CD8-positive, alpha-beta memory T cell (primary cell): ENCODE measurements at regions of chr19 and their contacts with region 1.

Region 1: DNA sequence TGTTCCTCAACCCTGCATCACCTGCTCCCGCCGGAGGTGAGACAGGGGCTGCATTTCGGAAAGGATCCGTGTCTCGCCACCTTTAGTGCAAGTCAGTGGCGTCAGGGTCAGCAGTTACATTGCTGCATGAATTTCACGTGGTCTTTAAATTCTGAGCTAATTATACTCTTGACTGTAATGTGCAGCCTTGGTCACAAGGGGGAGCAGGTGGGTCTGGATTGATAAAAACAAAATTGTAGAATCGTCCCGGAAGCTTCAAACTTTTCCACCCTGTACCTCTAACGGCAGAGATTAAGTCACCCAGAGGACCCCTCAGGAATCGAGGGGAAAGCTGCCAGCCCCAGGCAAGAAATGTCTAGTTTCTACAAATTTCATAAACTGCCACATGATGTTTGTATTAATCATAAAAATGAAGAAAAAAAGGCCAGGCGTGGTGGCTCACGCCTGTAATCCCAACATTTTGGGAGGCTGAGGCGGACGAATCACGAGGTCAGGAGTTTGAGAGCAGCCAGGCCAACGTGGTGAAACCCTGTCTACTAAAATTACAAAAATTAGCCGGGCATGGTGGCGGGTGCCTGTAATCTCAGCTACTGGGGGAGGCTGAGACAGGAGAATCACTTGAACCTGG is 20.2 kb downstream of the BBC3 start:
- DNase-seq: peak; percentile 66 to 83 (median 73)
- H3K4me3 ChIP-seq: no peak overlapping the region
- H3K4me3 Mint-ChIP-seq: no peak overlapping the region
- H3K27ac ChIP-seq: peak overlapping the region; percentile 53
- H3K27ac Mint-ChIP-seq: peak overlapping the region in 7 of 8 donors; percentile 20 to 82 (median 55)
- H3K4me1 ChIP-seq: peaks cover 11% of the 10 kb centered on the region
- H3K4me1 Mint-ChIP-seq: peaks cover 6 to 9% (median 6%) of the 10 kb centered on the region in 3 donors
- H3K27me3 ChIP-seq: no peaks in the 10 kb centered on the region
- H3K27me3 Mint-ChIP-seq: no peaks in the 10 kb centered on the region

Region 2: DNA sequence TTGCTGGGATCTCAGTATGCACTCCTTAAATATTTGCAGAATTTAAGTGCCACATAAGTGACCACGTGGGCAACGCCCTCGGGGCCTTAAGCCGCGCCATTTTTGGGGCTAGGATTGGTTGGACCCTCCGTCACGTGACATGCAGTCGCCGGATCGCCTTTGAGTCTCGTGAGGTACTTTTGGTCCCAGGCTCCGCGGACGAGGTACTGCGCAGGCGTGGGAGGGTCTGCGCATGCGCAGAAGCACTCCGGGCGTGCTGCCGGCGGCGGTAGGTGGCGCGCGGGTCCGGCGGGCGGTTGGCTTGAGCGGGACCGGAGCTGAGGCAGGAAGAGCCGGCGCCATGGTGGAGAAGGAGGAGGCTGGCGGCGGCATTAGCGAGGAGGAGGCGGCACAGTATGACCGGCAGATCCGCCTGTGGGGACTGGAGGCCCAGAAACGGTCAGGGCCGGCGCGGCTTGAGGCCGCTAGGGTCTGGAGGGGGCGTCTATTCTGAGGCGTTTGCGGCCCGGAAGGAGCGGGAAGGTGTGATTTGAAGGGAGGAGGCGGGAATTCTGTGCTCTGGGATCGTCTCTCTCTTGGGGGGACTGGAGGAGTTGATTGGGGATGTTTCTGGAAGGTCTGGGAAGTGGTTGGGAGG is 80.1 kb before region 1 on chr19 and contains the start of gene SAE1:
- CTCF ChIA-PET with region 1: interaction called, 17 read pairs
- POLR2A ChIA-PET with region 1: interaction called, 6 read pairs
- DNase-seq: peak; percentile 85 to 94 (median 89)
- H3K4me3 ChIP-seq: peak within 1 kb of the TSS; percentile 97
- H3K4me3 Mint-ChIP-seq: peak within 1 kb of the TSS; percentile 96 to 100 (median 98)
- H3K27ac ChIP-seq: peak within 1 kb of the TSS; percentile 90
- H3K27ac Mint-ChIP-seq: peak within 1 kb of the TSS; percentile 74 to 99 (median 96)
- H3K4me1 ChIP-seq: peaks cover 33% of the 10 kb centered on the region
- H3K4me1 Mint-ChIP-seq: peaks cover 39 to 57% (median 52%) of the 10 kb centered on the region in 3 donors
- H3K27me3 ChIP-seq: no peaks in the 10 kb centered on the region
- H3K27me3 Mint-ChIP-seq: peaks cover 0 to 8% of the 10 kb centered on the region in 2 donors
- total RNA-seq, gene SAE1: 167 to 172 TPM

Region 3: DNA sequence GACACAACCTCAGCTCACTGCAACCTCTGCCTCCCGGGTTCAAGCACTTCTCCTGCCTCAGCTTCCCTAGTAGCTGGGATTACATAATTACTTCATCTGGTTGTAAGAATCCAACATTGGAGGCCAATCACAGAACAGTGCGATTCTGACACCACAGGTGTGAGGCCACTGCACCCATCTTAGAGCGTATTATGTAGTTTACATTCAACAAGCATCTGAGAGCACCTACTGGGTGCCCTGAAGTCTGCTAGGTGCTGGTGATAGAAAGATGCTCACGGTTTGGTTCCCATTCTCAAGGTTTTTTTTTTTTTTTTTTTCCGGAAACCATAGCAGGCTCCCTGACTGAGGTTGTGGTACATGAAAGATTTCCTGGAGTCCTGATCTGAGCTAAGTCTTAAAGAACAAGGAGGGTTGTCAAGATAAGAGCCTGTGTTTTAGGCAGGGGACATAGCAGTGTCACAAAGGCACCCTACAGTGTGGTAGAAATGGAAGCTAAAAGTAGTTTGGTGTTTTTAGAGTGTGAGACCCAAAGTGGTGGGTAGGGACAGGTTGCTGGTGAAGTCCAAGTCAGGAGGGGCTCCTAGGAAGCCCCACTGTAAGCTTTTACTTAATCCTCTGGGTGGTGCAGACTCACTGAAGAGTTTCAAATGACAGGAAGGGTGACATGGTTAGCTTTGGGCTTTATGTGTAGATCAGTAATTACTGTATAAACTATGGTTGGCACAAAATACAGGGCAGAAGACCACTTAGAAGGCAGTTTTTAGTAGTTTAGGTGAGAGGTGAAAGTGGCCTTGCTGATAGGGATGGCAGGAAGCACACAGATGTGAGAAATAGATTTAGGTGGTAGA is 64.9 kb before region 1 on chr19:
- CTCF ChIA-PET with region 1: interaction called, 59 read pairs
- POLR2A ChIA-PET with region 1: interaction called, 3 read pairs
- DNase-seq: peak in 2 of 5 donors; percentile 50 to 77
- H3K4me3 ChIP-seq: peak overlapping the region; percentile 22
- H3K4me3 Mint-ChIP-seq: peak overlapping the region; percentile 12 to 74 (median 48)
- H3K27ac ChIP-seq: no peak overlapping the region
- H3K27ac Mint-ChIP-seq: peak overlapping the region; percentile 49 to 94 (median 76)
- H3K4me1 ChIP-seq: peaks cover 45% of the 10 kb centered on the region
- H3K4me1 Mint-ChIP-seq: peaks cover 32 to 61% (median 56%) of the 10 kb centered on the region in 3 donors
- H3K27me3 ChIP-seq: no peaks in the 10 kb centered on the region
- H3K27me3 Mint-ChIP-seq: no peaks in the 10 kb centered on the region

Region 4: GRCh38 chr19:47152224-47153017 is 58.4 kb before region 1 on chr19:
- CTCF ChIA-PET with region 1: interaction called, 59 read pairs
- POLR2A ChIA-PET with region 1: interaction called, 3 read pairs
- DNase-seq: no peak
- H3K4me3 ChIP-seq: no peak overlapping the region
- H3K4me3 Mint-ChIP-seq: no peak overlapping the region
- H3K27ac ChIP-seq: no peak overlapping the region
- H3K27ac Mint-ChIP-seq: peak overlapping the region in 2 of 8 donors; percentile 58 to 69
- H3K4me1 ChIP-seq: peaks cover 39% of the 10 kb centered on the region
- H3K4me1 Mint-ChIP-seq: peaks cover 28 to 57% (median 51%) of the 10 kb centered on the region in 3 donors
- H3K27me3 ChIP-seq: no peaks in the 10 kb centered on the region
- H3K27me3 Mint-ChIP-seq: no peaks in the 10 kb centered on the region

Region 5: DNA sequence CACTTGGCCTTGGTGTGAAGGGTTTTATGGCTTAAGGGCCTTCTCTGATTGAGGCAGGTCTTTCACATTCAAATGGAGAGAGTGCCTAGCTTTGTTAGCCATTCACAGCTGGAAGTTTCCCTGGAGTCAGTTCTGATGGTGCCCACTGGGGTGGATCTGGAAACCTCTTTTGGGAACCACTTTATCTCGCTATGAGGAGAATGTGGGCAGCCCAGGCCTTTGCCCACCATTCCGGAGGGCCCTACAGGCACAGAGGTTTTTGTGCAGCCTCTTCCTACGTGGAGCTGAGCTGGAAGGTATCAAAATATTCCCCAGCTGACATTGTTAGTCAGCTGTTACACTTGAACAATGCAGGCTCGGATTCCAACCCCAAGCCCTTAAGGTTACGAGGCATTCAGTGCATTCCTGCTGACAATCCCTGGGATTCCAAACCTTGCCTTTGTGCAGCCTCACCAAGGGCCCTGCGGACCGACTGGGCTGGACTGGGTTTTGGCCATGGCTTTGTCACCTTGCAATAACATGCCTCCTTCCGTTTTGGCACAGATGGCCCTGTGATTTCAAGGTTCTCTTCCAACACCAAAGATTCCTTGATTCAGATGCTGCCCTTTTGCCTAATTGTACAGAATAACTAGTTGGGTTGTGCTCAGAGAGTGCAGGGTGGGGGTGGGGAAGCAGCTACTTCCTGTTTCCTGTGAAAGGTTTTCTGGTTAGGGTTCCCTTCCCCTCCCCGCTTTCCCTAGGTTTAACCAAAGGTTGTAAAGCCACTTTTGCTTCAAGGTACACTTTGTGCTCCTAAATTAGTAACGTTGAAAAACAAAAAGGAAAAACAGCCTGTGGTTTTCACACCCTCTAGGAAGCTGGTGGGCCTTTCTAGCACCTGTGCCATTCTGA is 53.1 kb before region 1 on chr19:
- CTCF ChIA-PET with region 1: interaction called, 39 read pairs
- POLR2A ChIA-PET with region 1: interaction called, 3 read pairs
- DNase-seq: peak in 3 of 5 donors; percentile 21 to 59 (median 45)
- H3K4me3 ChIP-seq: peak overlapping the region; percentile 48
- H3K4me3 Mint-ChIP-seq: peak overlapping the region; percentile 62 to 84 (median 80)
- H3K27ac ChIP-seq: peak overlapping the region; percentile 2
- H3K27ac Mint-ChIP-seq: peak overlapping the region; percentile 73 to 98 (median 93)
- H3K4me1 ChIP-seq: peaks cover 69% of the 10 kb centered on the region
- H3K4me1 Mint-ChIP-seq: peaks cover 50 to 78% (median 68%) of the 10 kb centered on the region in 3 donors
- H3K27me3 ChIP-seq: no peaks in the 10 kb centered on the region
- H3K27me3 Mint-ChIP-seq: no peaks in the 10 kb centered on the region

Region 6: DNA sequence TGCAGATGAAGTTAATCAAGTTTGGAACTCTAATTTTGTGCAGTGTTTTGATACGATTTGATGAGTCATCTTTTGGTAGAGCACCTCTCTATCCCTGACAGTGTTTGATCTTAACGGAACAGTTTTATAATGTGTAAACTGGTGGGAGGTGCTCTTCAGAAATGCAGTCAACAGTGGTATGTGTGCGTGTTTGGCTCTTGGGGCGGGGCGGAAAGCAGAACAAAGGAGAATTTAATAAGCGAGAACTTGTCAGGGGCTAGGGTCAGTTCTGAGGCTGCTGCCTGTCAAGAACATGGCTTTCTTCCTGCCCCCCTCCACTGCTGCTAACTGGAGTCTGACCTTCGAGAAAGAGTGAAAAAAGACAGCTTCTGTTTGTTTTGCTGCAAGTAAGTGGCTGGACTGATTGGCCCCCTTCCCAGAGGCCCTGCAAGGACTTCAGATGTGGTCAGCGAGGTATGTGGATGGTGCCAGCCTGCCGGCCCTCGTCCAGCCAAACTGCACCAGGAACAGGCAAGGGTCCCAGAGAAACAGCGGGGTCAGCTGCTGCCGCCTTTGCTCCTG is 20.6 kb before region 1 on chr19:
- CTCF ChIA-PET with region 1: interaction called, 36 read pairs
- POLR2A ChIA-PET with region 1: interaction called, 8 read pairs
- DNase-seq: peak in 3 of 5 donors; percentile 39 to 67 (median 67)
- H3K4me3 ChIP-seq: no peak overlapping the region
- H3K4me3 Mint-ChIP-seq: peak overlapping the region; percentile 2 to 55 (median 33)
- H3K27ac ChIP-seq: no peak overlapping the region
- H3K27ac Mint-ChIP-seq: peak overlapping the region; percentile 48 to 91 (median 70)
- H3K4me1 ChIP-seq: peaks cover 72% of the 10 kb centered on the region
- H3K4me1 Mint-ChIP-seq: peaks cover 41 to 69% (median 55%) of the 10 kb centered on the region in 3 donors
- H3K27me3 ChIP-seq: no peaks in the 10 kb centered on the region
- H3K27me3 Mint-ChIP-seq: no peaks in the 10 kb centered on the region

Region 7: DNA sequence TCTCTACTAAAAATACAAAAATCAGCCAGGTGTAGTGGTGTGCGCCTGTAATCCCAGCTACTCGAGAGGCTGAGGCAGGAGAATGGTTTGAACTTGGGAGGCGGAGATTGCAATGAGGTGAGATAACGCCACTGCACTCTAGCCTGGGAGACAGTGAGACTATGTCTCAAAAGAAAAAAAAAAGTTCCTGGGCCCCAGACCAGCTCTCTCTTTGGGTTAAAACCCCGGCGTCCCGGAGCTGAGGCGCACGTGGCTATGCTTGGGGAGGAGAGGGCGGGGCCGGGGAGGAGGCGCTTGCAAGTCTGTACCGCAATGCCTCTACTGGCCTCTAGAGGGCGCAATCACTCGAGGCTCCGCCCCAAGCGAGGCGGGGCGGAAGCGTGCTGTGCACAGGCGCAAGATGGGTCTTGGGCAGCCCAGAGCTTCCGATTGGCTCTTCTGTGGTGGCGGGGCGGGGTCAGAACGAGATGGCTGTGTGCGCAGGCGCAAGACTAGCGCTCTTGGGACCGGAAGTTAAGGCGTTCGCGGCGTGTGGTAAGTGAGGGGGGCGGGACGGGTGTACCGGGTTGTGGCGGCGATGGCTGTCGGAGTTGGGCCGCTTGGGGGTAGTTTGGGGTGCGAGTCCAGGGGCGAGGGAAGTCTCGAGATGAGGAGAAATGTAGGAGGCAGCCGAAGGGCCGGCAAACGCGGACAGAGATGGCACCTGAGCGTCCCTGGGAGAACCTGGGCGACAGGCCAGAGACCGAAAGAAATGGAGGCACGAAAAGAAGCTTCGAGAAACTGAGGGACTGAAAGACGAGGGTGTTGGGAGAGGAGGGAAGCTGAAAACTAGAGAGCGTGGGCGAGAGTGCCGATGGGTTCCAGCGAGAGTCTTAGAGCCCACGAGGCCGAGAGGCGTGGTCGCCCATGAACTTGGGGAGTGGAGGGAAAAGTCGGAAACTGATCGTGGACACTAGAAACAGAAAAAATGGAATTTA is 138.3 kb after region 1 on chr19 and contains the start of gene DHX34:
- CTCF ChIA-PET with region 1: no interaction called
- POLR2A ChIA-PET with region 1: no interaction called
- DNase-seq: peak; percentile 98 to 100 (median 99)
- H3K4me3 ChIP-seq: peak within 1 kb of the TSS; percentile 92
- H3K4me3 Mint-ChIP-seq: peak within 1 kb of the TSS; percentile 91 to 98 (median 96)
- H3K27ac ChIP-seq: peak within 1 kb of the TSS; percentile 73
- H3K27ac Mint-ChIP-seq: peak within 1 kb of the TSS; percentile 81 to 98 (median 94)
- H3K4me1 ChIP-seq: peaks cover 22% of the 10 kb centered on the region
- H3K4me1 Mint-ChIP-seq: peaks cover 32 to 48% (median 33%) of the 10 kb centered on the region in 3 donors
- H3K27me3 ChIP-seq: no peaks in the 10 kb centered on the region
- H3K27me3 Mint-ChIP-seq: peaks cover 0 to 5% of the 10 kb centered on the region in 2 donors
- total RNA-seq, gene DHX34: 23.2 to 24.5 TPM